A673 (cell line): ENCODE measurements at regions of chr4 and their contacts with region 1.

Region 1: GRCh38 chr4:150867148-150867547 is 147.9 kb downstream of the LRBA start:
- DNase-seq: peak; percentile 88
- H3K4me3 ChIP-seq: no peak overlapping the region
- H3K27ac ChIP-seq: no peak overlapping the region
- H3K4me1 ChIP-seq: no peaks in the 10 kb centered on the region
- H3K27me3 ChIP-seq: no peaks in the 10 kb centered on the region
- CTCF ChIP-seq: peak; percentile 68

Region 2: DNA sequence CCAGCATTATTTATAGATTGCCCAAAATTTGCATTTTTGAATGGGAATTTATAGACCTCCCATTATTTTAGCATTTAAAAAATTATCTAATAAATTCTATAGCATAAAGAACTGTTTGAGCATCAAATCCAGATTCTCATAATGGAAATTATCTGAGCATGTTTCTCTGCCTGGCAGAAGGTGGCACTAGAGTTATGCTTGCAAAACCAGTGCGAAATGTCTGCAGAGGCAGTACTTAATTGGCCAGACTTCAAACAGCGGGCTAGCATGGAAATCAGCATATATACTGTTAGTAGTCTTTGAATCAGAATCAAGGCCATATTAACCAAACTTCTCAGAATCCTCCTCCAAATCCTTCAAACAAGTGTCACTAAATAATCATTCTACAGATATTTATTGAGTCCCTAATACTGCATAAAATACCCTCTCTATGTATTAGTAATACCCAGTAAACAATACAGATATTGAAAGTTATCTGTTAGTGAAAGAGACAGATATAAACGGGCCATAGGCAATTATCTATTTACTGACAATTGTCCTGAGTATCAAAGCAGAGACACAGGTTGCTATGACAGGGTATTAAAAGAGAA is 867.6 kb before region 1 on chr4:
- CTCF ChIA-PET with region 1: interaction called, 5 read pairs
- POLR2A ChIA-PET with region 1: no interaction called
- intact Hi-C with region 1: loop called (anchors 5 kb)
- DNase-seq: peak; percentile 86
- H3K4me3 ChIP-seq: no peak overlapping the region
- H3K27ac ChIP-seq: no peak overlapping the region
- H3K4me1 ChIP-seq: peaks cover 17% of the 10 kb centered on the region
- H3K27me3 ChIP-seq: no peaks in the 10 kb centered on the region
- CTCF ChIP-seq: peak; percentile 84

Region 3: DNA sequence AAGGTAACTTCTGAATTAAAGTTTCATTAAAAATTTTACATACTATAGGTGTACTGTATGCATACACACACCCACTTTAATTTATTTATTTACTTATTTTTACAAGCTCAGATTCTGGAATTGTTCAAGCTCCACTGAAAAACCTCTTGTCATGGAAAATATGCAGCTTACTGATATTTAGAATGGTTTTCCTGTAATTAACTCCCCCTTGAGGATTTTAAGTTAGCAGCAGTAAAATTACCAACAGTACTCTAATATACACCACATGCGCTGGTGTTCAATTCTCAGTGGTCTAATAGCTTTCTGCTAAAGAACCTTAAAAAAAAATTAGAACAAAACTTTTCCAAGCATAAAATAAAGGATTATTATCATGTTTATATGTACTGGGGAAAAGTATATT is 273.2 kb before region 1 on chr4:
- CTCF ChIA-PET with region 1: no interaction called
- POLR2A ChIA-PET with region 1: no interaction called
- intact Hi-C with region 1: loop called (anchors 10 kb)
- DNase-seq: peak; percentile 90
- H3K4me3 ChIP-seq: peak overlapping the region; percentile 3
- H3K27ac ChIP-seq: peak overlapping the region; percentile 43
- H3K4me1 ChIP-seq: peaks cover 62% of the 10 kb centered on the region
- H3K27me3 ChIP-seq: no peaks in the 10 kb centered on the region
- CTCF ChIP-seq: peak; percentile 59